HepG2 (cell line): ENCODE measurements at regions of chr2 and their contacts with region 1.

Region 1: DNA sequence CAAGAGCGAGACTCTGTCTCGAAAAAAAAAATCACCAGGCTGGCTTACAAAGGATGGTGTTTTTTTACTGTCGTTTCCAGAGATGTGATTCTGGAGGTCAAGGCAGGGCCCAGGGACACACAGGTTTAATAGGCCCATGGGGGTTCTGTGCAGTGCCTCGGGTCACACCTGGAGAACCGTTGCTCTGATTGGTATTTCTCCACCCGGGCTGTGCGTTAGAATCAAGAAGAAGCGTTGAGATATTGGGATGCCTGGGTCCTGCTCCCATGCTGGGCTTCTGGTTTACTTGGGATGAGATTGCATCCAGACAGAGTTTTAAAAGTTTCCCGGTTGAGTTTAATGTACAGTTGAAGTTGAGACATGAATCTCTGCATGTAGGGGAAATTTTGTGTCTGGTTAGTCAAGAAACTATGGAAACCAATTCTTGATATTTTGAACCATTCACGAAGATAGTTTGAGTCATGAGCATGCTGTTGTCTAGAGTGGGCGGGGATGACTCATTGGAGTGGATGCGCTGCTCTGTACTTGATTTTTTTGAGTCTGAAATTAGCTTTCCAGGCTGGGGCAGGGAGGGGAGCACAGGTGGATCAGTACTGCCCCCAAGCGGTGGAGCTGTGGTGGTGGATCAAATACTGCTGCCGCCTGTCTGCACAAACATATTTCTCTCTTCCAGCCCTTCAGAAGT is 50.1 kb downstream of the GREB1 start:
- DNase-seq: peak; percentile 85
- ATAC-seq: peak; percentile 56
- H3K4me3 ChIP-seq: no peak overlapping the region
- H3K27ac ChIP-seq: peak overlapping the region; percentile 36
- H3K4me1 ChIP-seq: peaks cover 22% of the 10 kb centered on the region
- H3K27me3 ChIP-seq: no peaks in the 10 kb centered on the region
- CTCF ChIP-seq: peak; percentile 92
- EP300 ChIP-seq: no peak; a peak in 1 of 4 replicates
- POLR2A ChIP-seq: no peak
- RAD21 ChIP-seq: peak; percentile 97

Region 2: GRCh38 chr2:10629819-10630532 is 954.0 kb before region 1 on chr2:
- CTCF ChIA-PET with region 1: no interaction called
- POLR2A ChIA-PET with region 1: no interaction called
- in situ Hi-C with region 1: no loop called
- intact Hi-C with region 1: no loop called
- DNase-seq: peak; percentile 82
- ATAC-seq: peak; percentile 80
- H3K4me3 ChIP-seq: no peak overlapping the region
- H3K27ac ChIP-seq: peak overlapping the region; percentile 34
- H3K4me1 ChIP-seq: peaks cover 36% of the 10 kb centered on the region
- H3K27me3 ChIP-seq: no peaks in the 10 kb centered on the region
- CTCF ChIP-seq: no peak
- EP300 ChIP-seq: peak in 1 of 2 experiments; percentile 43; a peak in 1 of 4 replicates
- POLR2A ChIP-seq: no peak
- RAD21 ChIP-seq: no peak

Region 3: GRCh38 chr2:11129598-11130449 is 454.2 kb before region 1 on chr2:
- CTCF ChIA-PET with region 1: interaction called, 6 read pairs
- POLR2A ChIA-PET with region 1: no interaction called
- in situ Hi-C with region 1: loop called (anchors 10 kb)
- intact Hi-C with region 1: loop called (anchors 5 kb)
- DNase-seq: peak; percentile 62
- ATAC-seq: peak; percentile 68
- H3K4me3 ChIP-seq: peak overlapping the region; percentile 46 to 64 (median 47)
- H3K27ac ChIP-seq: no peak overlapping the region
- H3K4me1 ChIP-seq: peaks cover 58% of the 10 kb centered on the region
- H3K27me3 ChIP-seq: peaks cover 3 to 32% of the 10 kb centered on the region in 2 experiments; a peak in 4 of 5 replicates
- CTCF ChIP-seq: peak; percentile 93
- EP300 ChIP-seq: no peak
- POLR2A ChIP-seq: no peak
- RAD21 ChIP-seq: peak; percentile 76

Region 4: DNA sequence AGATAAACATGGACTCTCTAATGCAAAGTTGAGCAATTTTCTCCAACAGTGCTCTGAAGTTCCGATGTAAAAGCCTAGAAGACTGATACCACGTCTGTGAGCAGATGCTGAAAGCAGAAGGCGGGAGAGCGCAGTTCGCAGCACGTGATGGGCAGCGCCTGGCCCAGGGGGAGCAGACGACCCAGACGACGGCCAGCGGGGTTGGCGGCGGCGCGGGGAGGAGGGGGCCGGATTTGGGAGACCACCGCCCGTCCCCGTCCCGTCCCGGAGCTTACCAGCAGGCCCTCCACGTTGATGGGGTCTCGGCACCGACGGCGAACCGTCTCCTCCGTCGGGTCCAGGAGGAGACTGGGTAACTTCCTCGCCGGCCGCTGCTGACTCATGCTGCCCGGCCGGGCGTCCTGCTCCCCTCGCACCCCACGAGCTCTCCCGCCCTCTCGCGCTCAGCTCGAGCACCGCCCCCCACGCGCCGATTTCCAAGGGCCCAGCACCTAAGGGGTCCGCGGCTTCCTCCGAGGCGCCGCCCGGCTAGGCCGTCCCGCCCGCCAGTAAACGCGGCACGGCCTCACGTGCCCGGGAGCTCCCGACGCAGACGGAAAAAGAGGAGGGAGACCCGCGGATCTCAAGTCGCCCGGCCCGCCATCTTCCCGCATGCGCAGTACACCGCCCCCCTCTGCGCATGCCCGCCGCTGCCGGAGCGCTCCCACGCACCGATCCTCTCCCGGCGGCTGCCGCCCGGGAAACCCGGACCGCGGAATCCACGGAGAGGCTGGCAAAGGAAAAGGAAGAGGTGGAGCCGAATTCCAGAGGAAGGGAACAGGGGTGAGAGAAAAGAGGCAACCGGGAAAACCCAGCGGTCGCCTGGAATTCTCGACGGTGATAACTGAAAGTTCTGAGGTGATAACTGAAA is 118.2 kb before region 1 on chr2 and contains the start of gene E2F6:
- CTCF ChIA-PET with region 1: no interaction called
- POLR2A ChIA-PET with region 1: interaction called, 17 read pairs
- in situ Hi-C with region 1: no loop called
- intact Hi-C with region 1: no loop called
- DNase-seq: peak; percentile 94
- ATAC-seq: peak; percentile 82
- H3K4me3 ChIP-seq: peak within 1 kb of the TSS; percentile 66 to 73 (median 71)
- H3K27ac ChIP-seq: peak within 1 kb of the TSS; percentile 67
- H3K4me1 ChIP-seq: peaks cover 66% of the 10 kb centered on the region
- H3K27me3 ChIP-seq: no peaks in the 10 kb centered on the region
- CTCF ChIP-seq: peak; percentile 44; the same call in 1 of the 2 replicates
- EP300 ChIP-seq: peak; percentile 75 to 77; a peak in 3 of 4 replicates
- POLR2A ChIP-seq: peak; percentile 65 to 76; a peak in 2 of 4 replicates
- RAD21 ChIP-seq: peak; percentile 47; the same call in 1 of the 2 replicates
- total RNA-seq, gene E2F6: 36.0 and 40.1 TPM in 2 replicates

Region 5: GRCh38 chr2:11498543-11499080 is 85.4 kb before region 1 on chr2:
- CTCF ChIA-PET with region 1: no interaction called
- POLR2A ChIA-PET with region 1: interaction called, 30 read pairs
- in situ Hi-C with region 1: no loop called
- intact Hi-C with region 1: loop called (anchors 1 kb)
- DNase-seq: peak; percentile 80
- ATAC-seq: peak; percentile 66
- H3K4me3 ChIP-seq: peak overlapping the region; percentile 35 to 70 (median 46)
- H3K27ac ChIP-seq: peak overlapping the region; percentile 98
- H3K4me1 ChIP-seq: peaks cover 97% of the 10 kb centered on the region
- H3K27me3 ChIP-seq: no peaks in the 10 kb centered on the region
- CTCF ChIP-seq: no peak
- EP300 ChIP-seq: no peak
- POLR2A ChIP-seq: peak; percentile 66 to 82; a peak in 3 of 4 replicates
- RAD21 ChIP-seq: 0 out of 2 replicates have a peak, but pooled peaks have one; percentile 20

Region 6: DNA sequence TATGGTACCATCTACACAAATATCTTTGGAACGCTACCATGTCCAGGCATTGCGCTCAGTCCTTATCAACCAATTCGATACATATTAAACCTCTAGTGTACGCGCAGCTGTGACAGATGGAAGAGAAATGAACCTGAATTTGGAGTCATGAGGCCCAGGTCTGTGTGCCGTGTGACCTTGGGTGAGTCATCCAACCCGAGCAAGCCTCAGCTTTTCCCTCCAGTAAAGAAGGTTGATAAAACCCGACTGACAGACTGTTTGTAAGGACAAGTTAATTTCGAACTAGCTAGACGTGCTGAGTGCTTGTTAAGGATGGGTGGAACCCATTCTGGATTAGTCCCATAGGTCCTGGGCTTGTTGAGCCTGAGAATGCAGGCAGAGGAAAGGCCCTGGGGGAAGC is 22.0 kb before region 1 on chr2:
- CTCF ChIA-PET with region 1: no interaction called
- POLR2A ChIA-PET with region 1: no interaction called
- in situ Hi-C with region 1: no loop called
- intact Hi-C with region 1: no loop called
- DNase-seq: no peak
- ATAC-seq: peak; percentile 15
- H3K4me3 ChIP-seq: no peak overlapping the region
- H3K27ac ChIP-seq: no peak overlapping the region
- H3K4me1 ChIP-seq: peaks cover 32% of the 10 kb centered on the region
- H3K27me3 ChIP-seq: no peaks in the 10 kb centered on the region
- CTCF ChIP-seq: no peak
- EP300 ChIP-seq: no peak
- POLR2A ChIP-seq: no peak
- RAD21 ChIP-seq: no peak

Region 7: DNA sequence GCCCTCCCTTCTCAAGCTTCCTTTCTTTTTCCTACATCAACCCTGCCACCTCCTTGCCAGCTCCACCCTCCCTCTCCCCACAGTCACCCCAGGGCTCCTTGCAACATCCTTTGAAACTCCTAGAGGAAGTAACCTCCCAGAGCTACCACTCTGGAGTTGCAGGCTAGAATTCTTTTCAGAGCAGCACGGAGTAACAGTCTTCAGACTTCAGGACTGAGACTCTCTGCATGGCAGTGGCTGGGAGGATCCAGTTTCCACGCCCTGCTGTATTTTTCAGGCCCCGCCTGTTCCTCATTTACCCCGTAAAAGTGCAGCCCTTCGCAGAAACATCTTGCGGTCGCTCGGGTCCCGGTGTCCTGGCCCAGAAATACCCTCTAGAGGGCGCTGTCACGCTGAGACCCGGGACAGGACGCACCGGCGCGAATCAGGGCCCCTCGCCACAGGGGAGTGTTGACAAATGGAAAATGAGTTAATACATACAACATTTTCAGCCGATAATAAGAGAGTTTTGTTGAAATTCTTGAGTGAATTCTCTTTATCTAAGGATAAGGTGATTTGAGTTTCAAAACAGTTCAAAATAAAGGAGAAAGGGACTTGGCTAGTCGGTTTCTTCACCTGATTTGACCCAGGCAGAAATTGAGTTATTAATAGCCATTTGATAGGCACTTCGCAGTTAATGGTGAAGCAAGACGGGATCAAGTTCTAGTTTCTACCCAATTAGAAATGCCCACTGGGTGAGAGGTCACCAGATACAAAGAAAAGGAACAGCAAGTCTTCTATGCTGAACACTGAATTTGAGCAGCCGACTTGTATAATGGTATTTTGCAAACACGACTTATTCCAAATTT is 104.5 kb after region 1 on chr2:
- CTCF ChIA-PET with region 1: no interaction called
- POLR2A ChIA-PET with region 1: no interaction called
- in situ Hi-C with region 1: no loop called
- intact Hi-C with region 1: loop called (anchors 10 kb)
- DNase-seq: peak; percentile 48
- ATAC-seq: peak; percentile 91
- H3K4me3 ChIP-seq: peak overlapping the region in 1 of 3 experiments; percentile 13; a peak in 2 of 6 replicates
- H3K27ac ChIP-seq: no peak overlapping the region
- H3K4me1 ChIP-seq: peaks cover 20% of the 10 kb centered on the region
- H3K27me3 ChIP-seq: peaks cover 0 to 54% of the 10 kb centered on the region in 2 experiments; a peak in 4 of 5 replicates
- CTCF ChIP-seq: peak; percentile 93
- EP300 ChIP-seq: no peak
- POLR2A ChIP-seq: no peak
- RAD21 ChIP-seq: peak; percentile 75